Heart left ventricle (tissue), 16 donors: ENCODE measurements at regions of chr4 and their contacts with region 1.

Region 1: DNA sequence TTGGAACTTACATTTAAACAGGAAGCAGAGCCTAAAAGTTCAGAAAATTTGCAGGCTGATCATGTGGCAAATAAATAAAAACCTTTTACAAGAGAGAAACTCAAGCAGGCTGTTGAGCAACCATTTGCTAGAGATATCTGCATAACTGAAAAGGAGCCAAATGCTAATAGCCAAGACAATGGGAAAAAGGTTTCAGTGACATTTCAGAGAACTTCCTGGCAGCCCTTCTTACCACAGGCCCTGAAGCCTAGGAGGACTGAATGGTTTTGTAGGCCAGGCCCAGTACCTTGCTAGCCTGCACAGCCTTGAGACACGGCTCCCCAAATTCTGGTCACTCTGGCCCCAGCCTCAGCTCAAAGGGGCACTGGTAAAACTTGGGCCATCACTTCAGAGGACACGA is 945.1 kb downstream of the ADGRL3 start:
- DNase-seq: no peak
- ATAC-seq: peak in 2 of 4 donors; percentile 75 to 79
- H3K4me3 ChIP-seq: no peak overlapping the region
- H3K27ac ChIP-seq: no peak overlapping the region
- H3K4me1 ChIP-seq: no peaks in the 10 kb centered on the region
- H3K27me3 ChIP-seq: no peaks in the 10 kb centered on the region
- CTCF ChIP-seq: no peak
- POLR2A ChIP-seq: no peak

Region 2: DNA sequence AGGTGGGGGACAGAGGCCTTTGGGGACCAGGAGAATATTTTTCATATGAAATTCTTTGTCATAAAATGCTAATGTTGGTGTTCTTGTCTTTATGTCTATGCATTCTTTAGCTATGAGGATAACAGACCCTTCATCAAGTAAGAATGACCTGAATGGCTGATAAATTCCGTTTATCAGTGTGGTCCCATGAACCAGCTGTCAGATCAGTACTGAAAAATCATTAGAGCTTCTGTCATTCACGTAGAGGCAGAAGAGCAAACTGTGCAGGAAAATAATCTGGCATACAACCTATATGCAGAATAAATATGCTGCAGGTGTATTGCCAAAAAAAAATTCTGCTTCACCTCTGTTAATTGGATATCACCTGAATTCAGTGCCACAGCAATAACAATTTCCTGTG is 116.5 kb before region 1 on chr4:
- intact Hi-C with region 1: no loop called
- DNase-seq: no peak
- ATAC-seq: no peak
- H3K4me3 ChIP-seq: no peak overlapping the region
- H3K27ac ChIP-seq: no peak overlapping the region
- H3K4me1 ChIP-seq: no peaks in the 10 kb centered on the region
- H3K27me3 ChIP-seq: no peaks in the 10 kb centered on the region
- CTCF ChIP-seq: no peak
- POLR2A ChIP-seq: no peak

Region 3: DNA sequence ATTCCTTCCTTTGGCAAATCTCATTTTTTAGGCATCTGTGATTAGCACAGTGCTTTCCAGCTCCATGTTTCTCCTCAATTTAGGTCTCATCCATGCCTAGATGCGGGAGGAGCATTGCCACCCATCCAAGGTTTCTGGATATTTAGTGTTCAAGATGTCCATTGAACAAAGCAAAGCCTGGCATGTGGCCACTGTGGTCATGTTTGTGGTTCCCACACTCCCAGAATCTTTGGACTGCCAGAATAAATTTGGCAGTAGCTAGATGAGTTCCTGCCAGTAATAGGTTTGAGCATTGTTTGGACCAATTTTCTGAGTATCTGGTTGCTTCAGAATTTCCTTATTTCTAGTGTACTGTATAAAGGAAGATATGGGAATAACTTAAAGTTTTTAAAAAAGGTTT is 178.9 kb after region 1 on chr4:
- intact Hi-C with region 1: no loop called
- DNase-seq: peak in 2 of 5 donors; percentile 23 to 51
- ATAC-seq: peak in 2 of 4 donors; percentile 38 to 46
- H3K4me3 ChIP-seq: no peak overlapping the region
- H3K27ac ChIP-seq: no peak overlapping the region
- H3K4me1 ChIP-seq: peaks cover 0 to 3% (median 0%) of the 10 kb centered on the region in 12 donors
- H3K27me3 ChIP-seq: no peaks in the 10 kb centered on the region
- CTCF ChIP-seq: no peak
- POLR2A ChIP-seq: no peak

Region 4: DNA sequence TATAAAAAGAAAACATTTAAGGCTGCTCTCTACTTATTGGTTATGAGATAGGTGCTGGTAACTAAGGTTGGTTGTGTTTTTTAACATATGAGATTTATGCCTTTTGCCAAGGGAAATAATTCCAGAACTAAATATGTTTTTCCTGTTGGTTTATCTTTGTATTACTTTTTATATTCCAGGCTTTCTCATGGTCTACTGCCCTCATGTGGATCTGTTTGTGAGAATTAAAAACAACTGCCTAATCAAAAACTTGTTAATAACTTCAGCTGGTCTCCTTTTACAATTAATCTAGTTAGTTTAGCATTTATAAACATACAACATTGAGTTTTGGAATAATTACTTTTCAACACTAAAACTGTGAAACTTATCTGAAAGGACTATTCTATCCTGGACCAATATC is 263.2 kb after region 1 on chr4:
- intact Hi-C with region 1: loop called in 1 of 10 experiments (anchors 10 kb)
- DNase-seq: no peak
- ATAC-seq: no peak
- H3K4me3 ChIP-seq: no peak overlapping the region
- H3K27ac ChIP-seq: no peak overlapping the region
- H3K4me1 ChIP-seq: peaks cover 0 to 13% (median 1%) of the 10 kb centered on the region in 12 donors
- H3K27me3 ChIP-seq: no peaks in the 10 kb centered on the region
- CTCF ChIP-seq: peak in 10 of 12 donors; percentile 6 to 44 (median 28)
- POLR2A ChIP-seq: no peak